Endothelial cell of umbilical vein (primary cell): ENCODE measurements at regions of chr6 and their contacts with region 1.

Region 1: DNA sequence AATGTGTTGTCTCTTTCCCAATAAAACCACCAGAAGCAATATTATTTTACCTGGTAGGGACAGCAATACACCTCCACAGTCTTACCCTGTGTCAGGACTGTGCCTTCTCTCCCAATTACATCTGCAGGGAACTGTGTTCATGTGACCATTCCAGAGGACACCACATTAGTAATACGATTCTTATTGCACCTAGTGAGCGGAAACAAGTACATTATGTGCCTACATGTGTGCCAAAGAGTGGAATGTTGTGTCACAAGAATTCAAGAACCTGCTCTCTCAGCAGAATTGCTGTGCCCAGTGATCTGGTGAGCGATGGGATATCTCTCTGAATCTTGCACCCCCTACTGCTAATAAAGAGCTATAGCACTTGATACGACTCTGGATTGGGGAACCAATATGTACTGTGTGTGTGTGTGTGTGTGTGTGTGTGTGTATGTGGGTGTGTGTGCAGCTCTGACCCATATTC is 57.4 kb upstream of the FOXC1 start:
- DNase-seq: peak; percentile 15
- H3K4me3 ChIP-seq: no peak overlapping the region
- H3K27ac ChIP-seq: no peak overlapping the region
- H3K4me1 ChIP-seq: peaks cover 2% of the 10 kb centered on the region
- H3K27me3 ChIP-seq: no peaks in the 10 kb centered on the region
- CTCF ChIP-seq: peak; percentile 32 to 35
- POLR2A ChIP-seq: no peak

Region 2: GRCh38 chr6:1200718-1201105 is 351.6 kb before region 1 on chr6:
- CTCF ChIA-PET with region 1: no interaction called
- POLR2A ChIA-PET with region 1: no interaction called
- dilution Hi-C with region 1: no loop called
- intact Hi-C with region 1: no loop called
- DNase-seq: no peak
- H3K4me3 ChIP-seq: no peak overlapping the region
- H3K27ac ChIP-seq: no peak overlapping the region
- H3K4me1 ChIP-seq: no peaks in the 10 kb centered on the region
- H3K27me3 ChIP-seq: no peaks in the 10 kb centered on the region
- CTCF ChIP-seq: no peak
- POLR2A ChIP-seq: no peak

Region 3: GRCh38 chr6:1524040-1524480 is 28.3 kb before region 1 on chr6:
- CTCF ChIA-PET with region 1: interaction called, 23 read pairs
- POLR2A ChIA-PET with region 1: no interaction called
- dilution Hi-C with region 1: no loop called
- intact Hi-C with region 1: loop called (anchors 1 kb)
- DNase-seq: peak; percentile 58
- H3K4me3 ChIP-seq: no peak overlapping the region
- H3K27ac ChIP-seq: no peak overlapping the region
- H3K4me1 ChIP-seq: no peaks in the 10 kb centered on the region
- H3K27me3 ChIP-seq: peaks cover 0 to 5% of the 10 kb centered on the region in 2 experiments
- CTCF ChIP-seq: peak; percentile 76 to 83
- POLR2A ChIP-seq: no peak

Region 4: DNA sequence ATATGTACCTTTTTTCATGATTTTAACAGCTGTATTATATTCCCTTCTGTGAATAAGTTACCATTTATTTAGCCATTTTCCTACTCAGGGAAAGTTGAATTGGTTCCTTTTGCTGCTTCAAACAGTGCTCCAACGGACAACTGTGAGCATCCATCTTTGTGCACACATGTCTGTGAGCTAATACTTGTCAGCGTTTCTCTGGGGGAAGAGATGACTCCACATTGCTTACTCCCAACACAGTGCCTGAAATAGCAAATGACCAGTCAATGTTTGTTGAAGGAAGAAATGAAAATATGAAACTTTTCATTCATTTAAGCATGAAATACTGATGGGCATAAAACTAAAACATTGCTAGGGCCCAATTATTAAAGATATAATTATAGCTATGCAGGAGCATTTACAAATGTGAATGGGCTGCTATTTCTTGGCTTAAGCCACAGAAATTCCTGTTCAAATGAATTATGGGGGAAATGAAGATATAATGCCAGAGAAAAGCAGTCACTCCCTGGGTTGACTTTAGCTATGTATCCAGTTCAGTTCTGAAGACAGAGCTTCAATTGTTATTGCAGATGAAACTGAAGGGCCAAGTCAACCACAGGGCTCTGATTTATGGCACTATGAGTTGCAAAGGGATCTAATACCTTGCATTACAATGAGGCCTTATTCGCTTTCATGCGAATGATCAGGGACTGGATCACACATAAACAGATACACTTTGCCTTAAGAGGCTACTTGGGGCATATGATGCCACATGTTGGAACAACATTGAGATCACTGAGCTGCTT is 10.0 kb after region 1 on chr6:
- CTCF ChIA-PET with region 1: interaction called, 18 read pairs
- POLR2A ChIA-PET with region 1: no interaction called
- dilution Hi-C with region 1: no loop called
- intact Hi-C with region 1: no loop called
- DNase-seq: no peak
- H3K4me3 ChIP-seq: no peak overlapping the region
- H3K27ac ChIP-seq: no peak overlapping the region
- H3K4me1 ChIP-seq: no peaks in the 10 kb centered on the region
- H3K27me3 ChIP-seq: peaks cover 2 to 10% of the 10 kb centered on the region in 2 experiments
- CTCF ChIP-seq: no peak
- POLR2A ChIP-seq: no peak